CD8-positive, alpha-beta T cell (primary cell): ENCODE measurements at regions of chr15 and their contacts with region 1.

Region 1: DNA sequence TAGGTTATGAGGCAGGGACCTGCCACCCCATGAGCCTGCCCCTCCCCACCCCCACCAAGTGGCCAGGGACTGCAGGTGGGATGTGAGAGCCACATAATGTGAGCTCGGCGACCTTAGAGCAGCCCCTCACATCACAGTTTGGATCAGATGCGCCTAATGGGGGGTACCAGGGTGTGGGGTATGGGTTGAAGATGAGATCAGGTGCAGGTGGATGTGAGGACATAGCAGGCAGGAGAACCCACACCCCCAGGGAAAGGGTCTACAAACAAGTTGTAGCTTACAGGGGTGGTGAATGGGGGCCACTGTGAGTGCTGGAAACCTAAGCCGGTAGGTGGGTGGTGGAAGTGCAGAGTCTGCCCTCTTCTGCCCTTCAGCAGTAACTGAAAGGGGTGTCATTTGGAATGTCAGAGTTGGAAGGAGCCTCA is 94.0 kb downstream of the CORO2B start:
- DNase-seq: no peak
- ATAC-seq: no peak
- H3K4me3 ChIP-seq: no peak overlapping the region
- H3K4me3 Mint-ChIP-seq: no peak overlapping the region
- H3K27ac ChIP-seq: no peak overlapping the region
- H3K27ac Mint-ChIP-seq: no peak overlapping the region
- H3K4me1 ChIP-seq: no peaks in the 10 kb centered on the region
- H3K4me1 Mint-ChIP-seq: peaks cover 4% of the 10 kb centered on the region
- H3K27me3 ChIP-seq: no peaks in the 10 kb centered on the region
- H3K27me3 Mint-ChIP-seq: peaks cover 10% of the 10 kb centered on the region
- CTCF ChIP-seq: no peak

Region 2: DNA sequence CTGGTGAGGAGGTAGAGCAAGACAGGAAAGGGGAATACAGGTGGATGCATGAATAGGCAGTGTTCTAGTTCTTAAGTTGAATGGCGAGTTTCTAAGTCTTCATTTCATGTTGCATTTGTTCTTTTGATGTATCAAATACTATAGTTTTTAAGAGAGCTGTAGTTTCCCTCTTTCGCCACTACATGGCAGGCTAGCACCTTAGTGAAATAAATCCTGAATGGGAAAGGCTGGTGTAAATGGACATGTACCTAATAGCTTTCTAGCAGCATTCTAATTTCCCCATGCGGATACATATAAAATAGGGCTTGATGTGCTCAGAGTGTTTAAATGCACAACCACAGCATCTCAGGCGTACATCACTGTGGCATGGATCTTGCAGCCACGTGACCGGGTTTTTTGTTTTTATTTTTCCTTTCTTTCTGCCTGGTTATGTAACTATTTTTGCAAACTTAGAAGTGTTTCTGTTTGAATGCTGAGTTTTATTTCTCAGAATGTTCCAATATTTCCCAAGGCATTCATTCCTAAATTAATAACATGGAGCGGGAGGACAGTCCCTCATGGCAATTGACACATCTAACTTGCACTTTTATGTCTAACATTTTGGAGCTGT is 419.8 kb before region 1 on chr15:
- CTCF ChIA-PET with region 1: interaction called, 6 read pairs
- POLR2A ChIA-PET with region 1: no interaction called
- intact Hi-C with region 1: loop called in 1 of 2 experiments (anchors 1 kb)
- DNase-seq: peak in 6 of 9 experiments; percentile 9 to 74 (median 38)
- ATAC-seq: peak; percentile 80
- H3K4me3 ChIP-seq: no peak overlapping the region
- H3K4me3 Mint-ChIP-seq: no peak overlapping the region
- H3K27ac ChIP-seq: no peak overlapping the region
- H3K27ac Mint-ChIP-seq: no peak overlapping the region
- H3K4me1 ChIP-seq: no peaks in the 10 kb centered on the region
- H3K4me1 Mint-ChIP-seq: peaks cover 8% of the 10 kb centered on the region
- H3K27me3 ChIP-seq: peaks cover 0 to 2% of the 10 kb centered on the region in 2 experiments
- H3K27me3 Mint-ChIP-seq: peaks cover 6% of the 10 kb centered on the region
- CTCF ChIP-seq: peak; percentile 95

Region 3: DNA sequence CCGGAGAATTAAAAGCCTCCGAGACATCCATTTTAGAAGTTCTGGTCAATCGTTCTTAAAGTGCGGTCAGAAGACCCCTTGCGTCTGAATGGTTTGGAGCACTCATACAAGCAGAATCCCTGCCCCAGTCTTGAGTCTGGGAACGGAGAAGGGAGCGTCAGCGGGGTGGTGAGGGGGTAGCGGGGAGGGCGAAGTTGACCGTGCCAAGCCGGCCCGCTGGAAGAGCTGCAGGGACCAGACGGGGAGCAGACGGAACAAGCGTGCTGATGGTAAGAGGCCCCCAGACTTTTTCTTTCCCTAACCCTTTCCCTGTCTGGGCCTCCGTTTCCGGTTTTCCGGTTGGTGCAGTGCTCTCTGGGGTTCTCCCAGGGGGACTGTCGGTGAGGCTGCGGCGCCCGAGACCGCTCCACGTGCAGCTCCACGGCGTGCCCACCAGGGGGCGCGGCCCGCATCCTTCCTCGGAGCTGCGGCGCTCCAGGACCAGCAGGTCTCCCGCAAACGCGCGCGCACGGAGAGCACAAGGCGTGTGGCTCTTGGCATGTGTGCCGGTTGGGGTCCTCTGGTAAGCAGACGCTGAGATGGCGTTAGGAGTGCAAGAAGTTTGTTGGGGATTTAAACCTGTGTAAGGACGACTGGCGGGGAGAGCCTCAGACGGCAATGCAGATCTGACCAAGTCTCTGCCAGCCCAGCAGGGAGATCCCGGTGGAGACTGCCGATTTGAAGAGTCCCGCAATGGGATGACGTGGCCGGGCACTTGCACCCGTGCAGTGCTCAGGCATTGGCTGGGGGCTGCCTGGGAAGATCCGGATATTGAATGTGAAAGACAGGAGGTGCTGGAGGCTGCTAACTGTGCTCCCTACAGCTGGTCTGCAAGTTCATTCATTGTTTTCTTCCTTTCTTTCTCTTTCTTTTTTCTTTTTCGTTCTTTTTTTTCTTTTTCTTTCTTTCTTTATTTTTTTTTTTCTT is 113.2 kb before region 1 on chr15:
- CTCF ChIA-PET with region 1: interaction called, 15 read pairs
- POLR2A ChIA-PET with region 1: no interaction called
- intact Hi-C with region 1: loop called in 1 of 2 experiments (anchors 5 kb)
- DNase-seq: peak; percentile 50 to 84 (median 70)
- ATAC-seq: peak; percentile 95
- H3K4me3 ChIP-seq: peak overlapping the region; percentile 30 to 66
- H3K4me3 Mint-ChIP-seq: peak overlapping the region; percentile 75
- H3K27ac ChIP-seq: no peak overlapping the region
- H3K27ac Mint-ChIP-seq: no peak overlapping the region
- H3K4me1 ChIP-seq: peaks cover 8% of the 10 kb centered on the region
- H3K4me1 Mint-ChIP-seq: peaks cover 18% of the 10 kb centered on the region
- H3K27me3 ChIP-seq: peaks cover 0 to 15% of the 10 kb centered on the region in 2 experiments
- H3K27me3 Mint-ChIP-seq: peaks cover 49% of the 10 kb centered on the region
- CTCF ChIP-seq: peak; percentile 92

Region 4: GRCh38 chr15:68620721-68621527 is 51.9 kb before region 1 on chr15:
- CTCF ChIA-PET with region 1: no interaction called
- POLR2A ChIA-PET with region 1: no interaction called
- intact Hi-C with region 1: no loop called
- DNase-seq: no peak
- ATAC-seq: no peak
- H3K4me3 ChIP-seq: no peak overlapping the region
- H3K4me3 Mint-ChIP-seq: no peak overlapping the region
- H3K27ac ChIP-seq: no peak overlapping the region
- H3K27ac Mint-ChIP-seq: no peak overlapping the region
- H3K4me1 ChIP-seq: no peaks in the 10 kb centered on the region
- H3K4me1 Mint-ChIP-seq: no peaks in the 10 kb centered on the region
- H3K27me3 ChIP-seq: no peaks in the 10 kb centered on the region
- H3K27me3 Mint-ChIP-seq: peaks cover 3% of the 10 kb centered on the region
- CTCF ChIP-seq: no peak

Region 5: DNA sequence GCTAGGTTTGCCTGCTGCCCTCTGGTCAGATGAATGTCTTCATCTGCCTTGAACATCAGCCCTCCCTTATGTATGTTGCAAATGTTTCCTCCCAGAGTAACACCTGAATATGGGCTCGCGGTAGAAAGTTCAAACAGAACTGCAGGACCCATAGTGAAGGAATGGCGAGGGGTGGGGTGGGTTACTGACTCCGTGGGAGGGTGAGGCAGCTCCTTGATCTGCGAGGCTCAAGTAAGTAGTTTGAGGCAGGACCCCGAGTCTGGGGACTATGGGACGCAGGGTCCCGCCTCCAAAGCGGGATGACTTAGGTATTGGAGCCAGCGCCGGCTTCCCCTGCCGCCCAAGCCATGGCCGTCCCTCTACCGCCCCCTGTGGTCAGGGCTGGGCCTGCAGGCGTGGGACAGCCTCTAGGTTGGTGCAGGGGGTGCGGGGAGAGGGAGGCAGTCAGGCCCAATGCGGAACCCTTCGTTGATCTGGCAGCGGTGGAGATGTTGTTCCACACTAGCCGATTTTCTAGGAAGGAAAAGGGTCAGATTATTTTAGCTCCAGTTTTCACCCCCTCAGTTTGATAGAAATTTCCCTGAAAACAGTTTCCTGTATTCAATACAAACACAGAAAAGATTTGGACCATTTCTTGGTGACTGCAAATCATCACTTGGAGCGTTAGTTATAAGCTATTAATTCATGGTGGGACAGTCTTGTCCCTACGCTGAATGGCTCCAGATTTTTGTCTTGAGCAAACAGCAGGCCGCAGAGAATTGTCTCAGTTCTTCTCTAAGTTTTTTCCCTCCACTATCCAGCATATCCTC is 21.7 kb before region 1 on chr15:
- CTCF ChIA-PET with region 1: interaction called, 10 read pairs
- POLR2A ChIA-PET with region 1: no interaction called
- intact Hi-C with region 1: no loop called
- DNase-seq: peak in 7 of 9 experiments; percentile 9 to 52 (median 27)
- ATAC-seq: no peak
- H3K4me3 ChIP-seq: no peak overlapping the region
- H3K4me3 Mint-ChIP-seq: no peak overlapping the region
- H3K27ac ChIP-seq: no peak overlapping the region
- H3K27ac Mint-ChIP-seq: no peak overlapping the region
- H3K4me1 ChIP-seq: no peaks in the 10 kb centered on the region
- H3K4me1 Mint-ChIP-seq: no peaks in the 10 kb centered on the region
- H3K27me3 ChIP-seq: no peaks in the 10 kb centered on the region
- H3K27me3 Mint-ChIP-seq: peaks cover 4% of the 10 kb centered on the region
- CTCF ChIP-seq: peak; percentile 47